WTC11 (cell line): ENCODE measurements at regions of chr4 and their contacts with region 1.

Region 1: DNA sequence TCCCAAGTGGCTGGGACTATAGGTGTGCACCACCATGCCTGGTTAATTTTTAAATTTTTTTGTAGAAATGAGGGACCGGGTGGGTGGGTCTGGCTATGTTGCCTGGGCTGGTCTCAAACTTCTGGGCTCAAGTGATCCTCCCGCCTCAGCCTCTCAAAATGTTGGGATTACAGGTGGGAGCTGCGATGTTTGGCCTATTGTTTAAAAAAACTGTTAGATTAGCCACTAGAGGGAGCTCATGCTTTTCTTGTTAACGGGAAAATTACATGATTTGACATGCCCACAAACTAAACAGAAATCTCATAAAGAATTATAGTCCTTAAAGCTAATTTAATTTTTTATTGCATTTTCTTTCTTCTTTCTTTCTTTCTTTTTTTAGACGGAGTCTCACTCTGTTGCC is 5.0 kb upstream of the SDAD1 start:
- DNase-seq: no peak
- ATAC-seq: no peak; the same call in 1 of the 2 replicates
- H3K4me3 Mint-ChIP-seq: no peak overlapping the region
- H3K27ac Mint-ChIP-seq: no peak overlapping the region
- H3K4me1 Mint-ChIP-seq: no peaks in the 10 kb centered on the region
- H3K27me3 Mint-ChIP-seq: peaks cover 9% of the 10 kb centered on the region
- CTCF ChIP-seq: peak; percentile 50

Region 2: DNA sequence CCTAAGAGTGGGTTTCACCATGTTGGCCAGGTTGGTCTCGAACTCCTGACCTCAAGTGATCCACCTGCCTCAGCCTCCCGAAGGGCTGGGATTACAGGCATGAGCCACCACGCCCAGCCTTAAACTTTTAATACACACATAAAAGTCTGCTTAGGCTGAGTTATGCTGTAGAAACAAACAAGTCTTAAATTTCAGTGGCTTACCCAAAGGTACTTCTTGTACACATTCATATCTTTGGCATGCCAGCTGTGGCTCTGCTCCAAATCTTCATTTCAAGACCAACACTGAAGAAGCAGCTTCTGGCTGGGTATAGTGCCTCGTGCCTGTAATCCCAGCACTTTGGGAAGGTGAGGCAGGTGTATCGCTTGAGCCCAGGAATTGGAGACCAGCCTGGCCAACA is 173.8 kb before region 1 on chr4:
- CTCF ChIA-PET with region 1: no interaction called
- POLR2A ChIA-PET with region 1: no interaction called
- DNase-seq: no peak
- ATAC-seq: no peak
- H3K4me3 Mint-ChIP-seq: no peak overlapping the region
- H3K27ac Mint-ChIP-seq: no peak overlapping the region
- H3K4me1 Mint-ChIP-seq: no peaks in the 10 kb centered on the region
- H3K27me3 Mint-ChIP-seq: no peaks in the 10 kb centered on the region
- CTCF ChIP-seq: no peak

Region 3: GRCh38 chr4:75948822-75949444 is 46.8 kb before region 1 on chr4:
- CTCF ChIA-PET with region 1: no interaction called
- POLR2A ChIA-PET with region 1: no interaction called
- DNase-seq: no peak
- ATAC-seq: no peak
- H3K4me3 Mint-ChIP-seq: no peak overlapping the region
- H3K27ac Mint-ChIP-seq: peak overlapping the region; percentile 41; the same call in 1 of the 2 replicates
- H3K4me1 Mint-ChIP-seq: peaks cover 2% of the 10 kb centered on the region
- H3K27me3 Mint-ChIP-seq: no peaks in the 10 kb centered on the region
- CTCF ChIP-seq: no peak

Region 4: DNA sequence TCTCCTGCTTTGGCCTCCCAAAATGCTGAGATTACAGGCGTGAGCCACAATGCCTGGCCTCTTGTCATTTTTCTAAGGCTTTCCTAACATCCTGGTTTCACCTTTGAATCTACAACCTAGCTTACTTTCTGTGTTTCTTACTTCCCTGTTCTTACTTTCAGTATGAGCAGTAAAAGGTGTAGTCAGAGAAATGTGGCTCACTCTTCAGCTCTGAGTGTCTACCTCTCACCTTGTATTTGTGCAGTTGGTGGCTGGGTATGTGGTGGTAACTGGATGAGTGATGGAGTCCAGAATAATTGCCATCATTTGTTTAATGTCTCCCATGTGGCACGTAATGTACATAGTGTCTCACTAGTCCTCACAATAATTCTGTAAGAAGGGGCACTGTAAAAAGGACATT is 59.3 kb after region 1 on chr4:
- CTCF ChIA-PET with region 1: interaction called, 23 read pairs
- POLR2A ChIA-PET with region 1: no interaction called
- DNase-seq: no peak
- ATAC-seq: no peak
- H3K4me3 Mint-ChIP-seq: no peak overlapping the region
- H3K27ac Mint-ChIP-seq: no peak overlapping the region
- H3K4me1 Mint-ChIP-seq: peaks cover 28% of the 10 kb centered on the region
- H3K27me3 Mint-ChIP-seq: peaks cover 2% of the 10 kb centered on the region
- CTCF ChIP-seq: no peak

Region 5: GRCh38 chr4:76067652-76068286 is 72.0 kb after region 1 on chr4:
- CTCF ChIA-PET with region 1: interaction called, 17 read pairs
- POLR2A ChIA-PET with region 1: no interaction called
- DNase-seq: peak; percentile 76
- ATAC-seq: peak; percentile 90
- H3K4me3 Mint-ChIP-seq: no peak overlapping the region
- H3K27ac Mint-ChIP-seq: no peak overlapping the region
- H3K4me1 Mint-ChIP-seq: no peaks in the 10 kb centered on the region; the same call in 1 of the 2 replicates
- H3K27me3 Mint-ChIP-seq: no peaks in the 10 kb centered on the region
- CTCF ChIP-seq: peak; percentile 66

Region 6: DNA sequence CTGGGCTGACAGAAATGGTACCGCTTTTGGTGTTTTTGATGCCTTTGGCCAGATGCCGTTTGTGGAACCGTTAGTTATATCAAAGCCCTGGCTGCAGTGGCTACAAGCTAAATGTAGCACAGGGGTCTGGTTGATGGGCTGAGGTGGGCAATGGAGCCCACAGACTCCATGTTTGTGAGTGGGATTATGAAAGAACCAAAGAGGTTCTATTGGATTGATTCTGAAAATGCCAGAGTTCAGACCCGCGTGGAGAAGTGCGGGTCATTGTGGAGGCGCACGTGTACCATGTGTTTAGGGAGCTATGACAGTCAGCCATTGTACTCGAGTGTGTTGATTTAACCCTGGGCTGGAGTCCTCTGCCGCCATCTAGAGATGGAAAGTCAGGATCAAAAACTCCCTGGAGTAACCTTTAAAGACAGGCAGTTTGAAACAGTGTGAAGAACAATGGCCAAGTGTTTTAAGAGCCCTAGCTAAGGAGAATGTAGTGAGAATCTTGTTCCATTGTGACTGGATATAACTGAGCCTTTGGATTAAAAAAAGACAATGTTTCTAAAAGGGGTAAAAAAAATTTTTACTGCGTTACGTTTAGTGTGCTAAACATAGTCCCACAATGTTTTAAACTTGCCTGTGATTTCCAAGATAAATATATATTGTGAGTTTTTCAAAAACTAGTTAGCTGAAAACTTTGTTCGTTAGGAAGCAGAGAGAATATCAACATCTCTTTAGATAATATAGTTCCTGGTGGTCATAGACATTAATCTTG is 91.5 kb after region 1 on chr4:
- CTCF ChIA-PET with region 1: interaction called, 53 read pairs
- POLR2A ChIA-PET with region 1: no interaction called
- DNase-seq: peak; percentile 56
- ATAC-seq: peak; percentile 99
- H3K4me3 Mint-ChIP-seq: peak overlapping the region; percentile 42
- H3K27ac Mint-ChIP-seq: no peak overlapping the region
- H3K4me1 Mint-ChIP-seq: peaks cover 6% of the 10 kb centered on the region
- H3K27me3 Mint-ChIP-seq: no peaks in the 10 kb centered on the region
- CTCF ChIP-seq: no peak